ENCODE measurements at regions of chr11 and their contacts with region 1.

Region 1: DNA sequence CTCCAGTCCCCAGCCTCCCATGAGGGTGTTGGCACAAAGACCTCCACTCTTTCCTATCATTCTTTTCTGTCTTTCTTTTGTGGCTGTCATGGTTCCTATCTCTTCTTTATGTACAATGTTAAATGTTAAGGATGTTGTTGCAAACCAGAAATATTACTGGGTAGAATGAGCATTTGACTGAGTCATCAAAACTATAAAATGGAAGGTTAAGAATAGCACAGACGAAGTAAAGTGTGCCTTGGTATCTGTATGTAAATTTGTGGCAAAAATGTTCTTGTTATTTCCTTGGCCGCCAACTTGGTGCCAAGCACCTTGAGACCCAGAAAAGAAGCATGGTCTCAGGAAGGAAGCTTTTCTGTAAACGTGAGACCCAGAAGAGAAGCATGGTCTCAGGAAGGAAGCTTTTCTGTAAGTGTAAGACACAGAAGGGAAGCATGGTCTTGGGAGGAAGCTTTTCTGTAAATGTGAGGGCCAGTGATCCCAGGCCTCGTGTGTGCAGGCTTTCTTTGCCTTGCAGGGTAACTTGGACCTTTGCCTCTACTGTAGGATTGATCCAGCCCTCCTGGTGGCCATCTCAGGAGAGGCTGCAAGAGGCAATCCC is 6.7 kb upstream of the PKP3 start:
- DNase-seq: peak in 1 of 9 experiments; percentile 33
- ATAC-seq: no peak
- H3K4me3 ChIP-seq: no peak overlapping the region
- H3K4me3 Mint-ChIP-seq: no peak overlapping the region
- H3K27ac ChIP-seq: peak overlapping the region in 1 of 2 experiments; percentile 1
- H3K27ac Mint-ChIP-seq: peak overlapping the region; percentile 52
- H3K4me1 ChIP-seq: no peaks in the 10 kb centered on the region
- H3K4me1 Mint-ChIP-seq: peaks cover 7% of the 10 kb centered on the region
- H3K27me3 ChIP-seq: no peaks in the 10 kb centered on the region
- H3K27me3 Mint-ChIP-seq: peaks cover 2% of the 10 kb centered on the region
- CTCF ChIP-seq: no peak

Region 2: DNA sequence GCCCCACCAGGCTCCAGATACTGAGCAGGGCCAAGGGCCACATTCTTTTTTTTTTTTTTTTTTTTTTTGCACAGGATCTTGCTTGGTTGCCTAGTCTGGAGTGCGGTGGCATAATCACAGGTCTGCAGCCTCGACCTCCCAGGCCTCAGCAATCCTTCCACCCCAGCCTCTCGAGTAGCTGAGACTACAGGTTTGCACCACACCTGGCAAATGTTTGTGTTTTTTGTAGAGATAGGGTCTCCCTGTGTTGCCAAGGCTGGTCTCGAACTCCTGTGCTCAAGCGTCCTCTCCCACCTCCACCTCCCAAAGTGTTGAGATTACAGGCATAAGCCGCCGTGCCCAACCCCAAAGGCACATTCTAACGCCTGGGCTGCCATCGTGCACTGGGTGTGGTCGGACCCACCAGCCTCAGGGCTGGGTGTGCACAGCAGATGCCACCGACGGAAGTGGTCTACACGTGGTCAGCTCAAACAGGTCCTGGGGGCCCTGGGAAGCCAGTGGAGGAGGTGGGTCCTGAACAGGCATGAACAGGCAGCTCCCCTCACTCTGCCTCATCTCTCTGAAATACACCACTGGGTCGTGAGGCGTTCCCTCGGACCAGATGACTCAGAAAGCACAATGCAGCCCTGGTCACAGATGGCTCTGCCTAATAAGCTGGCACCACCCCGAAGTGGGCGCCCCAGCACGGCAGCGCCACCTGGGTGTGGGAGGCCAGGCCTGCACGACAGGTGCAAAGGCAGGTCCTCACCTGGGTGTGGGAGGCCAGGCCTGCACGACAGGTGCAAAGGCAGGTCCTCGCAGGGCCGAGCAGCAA is 23.1 kb before region 1 on chr11:
- CTCF ChIA-PET with region 1: interaction called, 11 read pairs
- POLR2A ChIA-PET with region 1: no interaction called
- intact Hi-C with region 1: no loop called
- DNase-seq: peak; percentile 45 to 83 (median 67)
- ATAC-seq: peak; percentile 86
- H3K4me3 ChIP-seq: no peak overlapping the region
- H3K4me3 Mint-ChIP-seq: no peak overlapping the region
- H3K27ac ChIP-seq: peak overlapping the region in 1 of 2 experiments; percentile 21
- H3K27ac Mint-ChIP-seq: no peak overlapping the region
- H3K4me1 ChIP-seq: peaks cover 11% of the 10 kb centered on the region
- H3K4me1 Mint-ChIP-seq: peaks cover 21% of the 10 kb centered on the region
- H3K27me3 ChIP-seq: peaks cover 11 to 17% of the 10 kb centered on the region in 2 experiments
- H3K27me3 Mint-ChIP-seq: peaks cover 27% of the 10 kb centered on the region
- CTCF ChIP-seq: peak; percentile 49